ENCODE measurements at regions of chrX and their contacts with region 1.

Region 1: DNA sequence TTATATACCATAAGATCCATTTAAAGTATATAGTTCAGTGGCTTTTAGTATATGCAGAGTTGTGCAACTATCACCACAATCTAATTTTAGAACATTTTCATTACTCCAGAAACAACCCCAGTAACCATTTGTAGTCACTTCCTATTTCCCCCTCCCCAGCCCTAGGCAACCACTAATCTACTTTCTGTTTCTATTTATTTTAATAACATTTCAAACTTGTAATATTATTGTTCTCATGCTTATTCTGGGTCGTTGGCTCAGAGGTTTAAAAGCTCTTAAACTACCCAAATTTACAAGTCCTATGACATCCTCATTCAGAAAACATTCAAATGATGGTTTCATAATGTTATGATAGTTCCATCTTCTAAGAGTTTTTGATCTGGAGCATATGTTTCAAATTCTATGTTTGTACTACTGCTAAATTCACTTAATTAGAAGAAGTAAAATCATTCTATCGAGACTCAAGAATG is 18.4 kb downstream of the XIAP start:
- DNase-seq: no peak
- H3K4me3 Mint-ChIP-seq: peak overlapping the region; percentile 37
- H3K27ac Mint-ChIP-seq: peak overlapping the region; percentile 58
- H3K4me1 Mint-ChIP-seq: peaks cover 20% of the 10 kb centered on the region
- H3K27me3 Mint-ChIP-seq: no peaks in the 10 kb centered on the region

Region 2: DNA sequence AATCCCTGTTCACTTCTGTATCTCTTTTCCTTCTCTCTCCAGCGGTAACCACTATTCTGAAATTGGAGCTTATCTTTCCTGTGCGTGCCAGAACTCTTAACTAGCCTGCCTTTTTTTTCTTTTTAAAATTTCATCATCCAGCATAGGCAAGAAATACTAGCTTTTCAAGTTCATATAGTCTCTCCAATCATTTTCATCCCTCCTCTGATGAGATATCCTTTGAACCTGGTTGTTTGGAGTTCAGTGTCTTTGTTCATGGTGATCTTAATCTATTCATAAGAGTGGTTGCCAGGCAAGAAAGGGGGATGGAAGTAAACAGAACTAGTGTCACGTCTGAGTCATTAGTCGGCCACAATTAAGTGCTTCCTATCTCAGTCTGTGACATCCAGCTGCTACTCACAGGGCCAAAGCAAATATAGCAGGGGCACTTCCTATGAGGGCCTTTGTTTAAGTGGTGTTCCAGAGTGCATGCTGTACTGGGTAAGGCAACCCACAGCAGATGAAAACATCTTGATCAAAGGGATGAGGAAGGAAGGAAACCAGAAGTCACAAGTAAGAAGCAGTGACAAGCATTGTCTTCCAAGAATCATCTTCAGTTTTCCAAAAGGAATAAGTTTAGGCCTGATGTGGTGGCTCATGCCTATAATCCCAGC is 74.8 kb before region 1 on chrX:
- intact Hi-C with region 1: no loop called
- DNase-seq: no peak
- H3K4me3 Mint-ChIP-seq: no peak overlapping the region
- H3K27ac Mint-ChIP-seq: peak overlapping the region; percentile 7
- H3K4me1 Mint-ChIP-seq: peaks cover 5% of the 10 kb centered on the region
- H3K27me3 Mint-ChIP-seq: no peaks in the 10 kb centered on the region

Region 3: DNA sequence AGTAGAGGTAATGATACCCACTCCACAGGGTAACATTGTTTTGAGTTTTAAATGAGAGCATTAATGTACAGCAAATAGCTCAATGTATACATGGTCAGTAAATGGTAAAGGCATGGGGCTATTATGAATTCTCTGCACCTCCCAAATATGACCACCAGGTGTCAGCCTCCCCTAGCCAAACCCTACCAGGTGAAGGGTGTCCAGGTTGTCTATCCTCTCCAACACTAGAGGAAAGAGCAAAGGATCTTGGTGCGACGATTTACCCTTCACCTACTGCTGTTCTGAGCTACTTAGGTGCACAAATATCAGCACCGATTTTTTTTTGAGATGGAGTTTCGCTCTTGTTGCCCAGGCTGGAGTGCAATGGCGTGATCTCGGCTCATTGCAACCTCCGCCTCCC is 44.9 kb before region 1 on chrX:
- intact Hi-C with region 1: loop called (anchors 2 kb)
- DNase-seq: peak; percentile 36
- H3K4me3 Mint-ChIP-seq: no peak overlapping the region
- H3K27ac Mint-ChIP-seq: no peak overlapping the region
- H3K4me1 Mint-ChIP-seq: peaks cover 3% of the 10 kb centered on the region
- H3K27me3 Mint-ChIP-seq: peaks cover 8% of the 10 kb centered on the region

Region 4: GRCh38 chrX:123859846-123860838 is 18.1 kb before region 1 on chrX and contains the start of gene XIAP:
- intact Hi-C with region 1: loop called (anchors 2 kb)
- DNase-seq: peak; percentile 63
- H3K4me3 Mint-ChIP-seq: peak within 1 kb of the TSS; percentile 84
- H3K27ac Mint-ChIP-seq: peak within 1 kb of the TSS; percentile 84
- H3K4me1 Mint-ChIP-seq: peaks cover 9% of the 10 kb centered on the region
- H3K27me3 Mint-ChIP-seq: no peaks in the 10 kb centered on the region
- total RNA-seq, gene XIAP: 32.7 and 33.4 TPM in 2 replicates

Region 5: DNA sequence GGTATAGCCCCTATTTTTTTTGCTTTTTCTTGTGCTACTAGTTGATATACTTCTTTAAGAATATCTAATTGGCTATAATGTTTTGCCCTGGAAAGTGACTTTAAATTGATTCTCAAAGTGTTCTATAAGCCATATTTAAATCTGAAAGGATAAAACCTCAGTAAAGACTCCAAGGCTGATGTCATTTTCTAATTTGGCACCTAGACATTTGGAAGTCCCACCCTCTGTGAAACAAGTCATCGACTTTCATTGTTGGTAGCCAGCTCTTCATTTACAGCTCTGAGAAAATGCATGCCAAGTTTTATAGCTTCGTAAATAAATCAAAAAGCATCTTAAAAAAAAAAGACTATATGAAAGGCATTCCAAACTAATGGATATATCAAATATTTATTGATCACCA is 65.2 kb after region 1 on chrX:
- intact Hi-C with region 1: no loop called
- DNase-seq: no peak
- H3K4me3 Mint-ChIP-seq: no peak overlapping the region
- H3K27ac Mint-ChIP-seq: no peak overlapping the region
- H3K4me1 Mint-ChIP-seq: no peaks in the 10 kb centered on the region
- H3K27me3 Mint-ChIP-seq: no peaks in the 10 kb centered on the region

Measured in activated T-helper 2 cell treated with anti-CD3 and anti-CD28 coated beads, Interferon-gamma antibody, Interleukin-2, Interleukin-4, amounts not matched to agents 10 μg/mL and 5 μg/mL and 100 μg/mL, durations not matched to agents 14 hours and 24 hours and 36 hours (primary cell).